ENCODE measurements at regions of chr3 and their contacts with region 1.

Region 1: DNA sequence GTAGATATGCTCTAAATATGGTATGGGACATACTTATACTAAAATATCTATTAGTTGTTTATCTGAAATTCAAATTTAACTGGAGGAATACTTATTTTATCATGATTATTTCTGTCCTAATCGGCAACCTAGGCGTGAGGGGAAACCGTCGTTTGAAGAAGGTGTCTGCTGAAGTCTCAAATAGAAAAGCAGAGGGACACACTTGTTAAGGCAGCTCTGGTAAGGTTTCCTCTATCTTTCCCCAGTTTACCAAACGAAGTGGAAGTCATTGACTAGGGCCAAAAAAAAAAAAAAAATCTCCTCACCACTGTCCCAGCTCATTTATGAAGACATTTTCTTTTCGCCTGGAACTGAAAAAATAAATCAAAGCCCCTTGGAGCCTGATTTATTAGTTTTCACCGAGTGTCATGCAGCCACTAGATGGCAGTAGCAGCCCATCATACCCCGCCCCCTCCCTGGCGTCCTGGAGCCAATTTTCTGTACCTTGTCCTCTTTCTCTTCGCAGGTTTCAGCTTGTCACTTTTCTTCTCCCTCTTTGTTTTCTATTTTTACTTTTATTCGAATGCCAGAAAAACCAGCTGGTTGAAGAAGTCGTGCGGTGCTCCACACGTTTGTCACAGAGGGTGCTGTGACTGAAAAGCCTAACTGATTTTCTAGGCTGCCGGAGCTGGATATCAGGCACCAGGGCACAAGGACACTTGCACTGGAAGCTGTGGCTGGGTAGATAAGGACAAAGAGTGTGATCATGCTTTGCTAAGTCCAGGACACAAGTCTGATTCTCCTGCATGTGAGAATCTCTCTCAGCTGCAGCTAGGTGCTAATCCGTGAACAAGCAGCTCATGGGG is 238.7 kb downstream of the ZPLD1 start:
- DNase-seq: peak; percentile 51 to 73 (median 60)
- ATAC-seq: peak; percentile 84 to 98 (median 92)
- H3K4me3 ChIP-seq: peak overlapping the region in 3 of 12 donors; percentile 2 to 26 (median 22)
- H3K27ac ChIP-seq: peak overlapping the region in 6 of 12 donors; percentile 10 to 54 (median 30)
- H3K4me1 ChIP-seq: peaks cover 0 to 11% (median 0%) of the 10 kb centered on the region in 12 donors
- H3K27me3 ChIP-seq: peaks cover 0 to 8% (median 0%) of the 10 kb centered on the region in 9 donors
- CTCF ChIP-seq: peak; percentile 59 to 84 (median 76)
- POLR2A ChIP-seq: no peak

Region 2: DNA sequence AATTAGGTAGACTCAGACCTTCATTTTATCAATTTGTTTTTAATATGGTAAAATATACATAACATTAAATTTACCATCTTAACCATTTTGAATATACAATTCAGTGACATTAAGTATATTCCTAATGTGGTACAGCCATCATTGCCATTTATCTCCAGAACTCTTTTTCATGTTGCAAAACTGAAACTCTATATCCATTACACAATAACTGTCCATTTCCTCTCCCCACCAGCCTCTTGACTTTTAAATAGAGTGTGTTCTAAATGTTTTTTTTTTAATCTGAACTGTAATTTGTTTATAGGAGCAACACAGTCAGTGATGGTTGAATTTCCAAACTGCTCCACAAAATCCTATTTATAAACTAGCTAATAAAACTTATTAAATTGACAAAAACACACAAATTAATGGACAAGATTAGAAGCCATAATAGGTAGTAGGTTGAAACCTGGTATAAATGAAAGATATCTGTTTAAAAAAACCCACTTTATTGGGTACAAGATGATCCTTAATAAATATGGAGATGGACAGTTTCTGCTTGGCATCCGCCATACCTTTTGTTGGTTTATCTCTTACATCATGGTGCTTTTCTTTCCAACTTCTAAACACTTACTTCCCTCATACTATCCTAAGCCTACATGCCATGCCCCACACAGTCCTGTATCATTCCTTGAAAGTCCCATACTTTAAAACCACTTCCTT is 96.3 kb before region 1 on chr3:
- intact Hi-C with region 1: no loop called
- DNase-seq: no peak
- ATAC-seq: no peak
- H3K4me3 ChIP-seq: no peak overlapping the region
- H3K27ac ChIP-seq: no peak overlapping the region
- H3K4me1 ChIP-seq: no peaks in the 10 kb centered on the region
- H3K27me3 ChIP-seq: no peaks in the 10 kb centered on the region
- CTCF ChIP-seq: no peak
- POLR2A ChIP-seq: no peak

Region 3: GRCh38 chr3:102733791-102734574 is 60.5 kb after region 1 on chr3:
- intact Hi-C with region 1: loop called in 3 of 10 experiments (anchors 2 to 5 kb)
- DNase-seq: no peak
- ATAC-seq: no peak
- H3K4me3 ChIP-seq: no peak overlapping the region
- H3K27ac ChIP-seq: no peak overlapping the region
- H3K4me1 ChIP-seq: peaks cover 0 to 8% (median 0%) of the 10 kb centered on the region in 12 donors
- H3K27me3 ChIP-seq: no peaks in the 10 kb centered on the region
- CTCF ChIP-seq: no peak
- POLR2A ChIP-seq: no peak

Region 4: GRCh38 chr3:102741108-102741507 is 67.6 kb after region 1 on chr3:
- intact Hi-C with region 1: loop called in 4 of 10 experiments (anchors 2 to 5 kb)
- DNase-seq: no peak
- ATAC-seq: peak in 2 of 4 donors; percentile 37 to 54
- H3K4me3 ChIP-seq: no peak overlapping the region
- H3K27ac ChIP-seq: no peak overlapping the region
- H3K4me1 ChIP-seq: peaks cover 0 to 4% (median 0%) of the 10 kb centered on the region in 12 donors
- H3K27me3 ChIP-seq: no peaks in the 10 kb centered on the region
- CTCF ChIP-seq: peak in 5 of 12 donors; percentile 15 to 34 (median 16)
- POLR2A ChIP-seq: no peak

Measured in heart left ventricle (tissue), 16 donors.